Adrenal gland (tissue), 19 donors: ENCODE measurements at regions of chr18 and their contacts with region 1.

Region 1: GRCh38 chr18:79465392-79465991 is 69.8 kb downstream of the NFATC1 start:
- DNase-seq: no peak
- H3K4me3 ChIP-seq: no peak overlapping the region
- H3K27ac ChIP-seq: no peak overlapping the region
- H3K4me1 ChIP-seq: no peaks in the 10 kb centered on the region
- H3K27me3 ChIP-seq: no peaks in the 10 kb centered on the region
- CTCF ChIP-seq: no peak
- POLR2A ChIP-seq: no peak

Region 2: DNA sequence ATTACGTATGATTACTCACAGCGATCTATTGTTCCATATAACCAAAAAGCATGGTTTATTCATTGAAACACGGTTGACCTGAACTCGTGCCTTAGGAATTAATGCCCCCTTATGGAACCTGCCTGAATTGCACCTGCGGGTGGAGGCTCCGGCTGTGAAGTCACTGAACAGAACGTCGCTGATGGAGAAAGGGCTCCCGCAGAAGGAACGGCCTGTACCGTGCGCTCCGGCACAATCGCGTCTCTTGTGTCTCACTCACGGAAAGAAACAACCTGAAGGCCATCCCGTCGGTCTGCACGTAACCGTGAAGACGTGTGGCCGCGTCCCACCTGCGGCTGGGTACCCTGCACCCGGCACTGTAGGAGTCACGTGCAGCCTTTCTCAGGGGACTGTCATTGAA is 63.4 kb after region 1 on chr18:
- intact Hi-C with region 1: loop called in 1 of 2 experiments (anchors 10 kb)
- DNase-seq: peak; percentile 47 to 76 (median 62)
- H3K4me3 ChIP-seq: no peak overlapping the region
- H3K27ac ChIP-seq: no peak overlapping the region
- H3K4me1 ChIP-seq: no peaks in the 10 kb centered on the region
- H3K27me3 ChIP-seq: no peaks in the 10 kb centered on the region
- CTCF ChIP-seq: peak; percentile 61 to 86 (median 71)
- POLR2A ChIP-seq: no peak

Region 3: GRCh38 chr18:79616651-79617518 is 151.4 kb after region 1 on chr18:
- intact Hi-C with region 1: no loop called
- DNase-seq: peak in 3 of 7 donors; percentile 12 to 28 (median 28)
- H3K4me3 ChIP-seq: peak overlapping the region in 1 of 4 donors; percentile 45
- H3K27ac ChIP-seq: no peak overlapping the region
- H3K4me1 ChIP-seq: no peaks in the 10 kb centered on the region
- H3K27me3 ChIP-seq: peaks cover 5% of the 10 kb centered on the region
- CTCF ChIP-seq: no peak
- POLR2A ChIP-seq: no peak